ENCODE measurements at regions of chr4 and their contacts with region 1.

Region 1: DNA sequence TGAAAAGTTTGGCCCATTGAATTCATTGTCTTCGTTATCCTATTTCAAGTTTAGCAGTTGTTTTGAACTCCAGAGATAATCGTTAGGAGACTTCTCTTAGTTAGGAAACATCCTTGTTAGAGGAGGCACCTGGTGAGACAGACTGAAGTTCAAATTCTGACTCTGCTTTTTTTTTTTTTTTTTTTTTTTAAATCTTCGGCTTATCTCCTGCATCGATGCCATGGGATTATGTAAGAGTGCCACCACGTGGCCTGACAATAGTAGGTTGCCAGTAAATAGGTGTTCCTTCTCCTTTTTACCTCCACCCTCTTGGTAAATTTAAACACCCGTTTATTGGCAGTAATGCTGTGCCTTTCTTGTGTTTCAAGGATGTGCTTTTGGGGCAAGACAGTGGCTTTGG is 149.3 kb downstream of the SOWAHB start:
- DNase-seq: peak; percentile 69
- H3K4me3 Mint-ChIP-seq: no peak overlapping the region
- H3K27ac Mint-ChIP-seq: no peak overlapping the region
- H3K4me1 Mint-ChIP-seq: peaks cover 2% of the 10 kb centered on the region
- H3K27me3 Mint-ChIP-seq: peaks cover 27% of the 10 kb centered on the region

Region 2: GRCh38 chr4:76430519-76431388 is 317.9 kb before region 1 on chr4:
- intact Hi-C with region 1: loop called (anchors 2 kb)
- DNase-seq: peak; percentile 62
- H3K4me3 Mint-ChIP-seq: no peak overlapping the region
- H3K27ac Mint-ChIP-seq: no peak overlapping the region
- H3K4me1 Mint-ChIP-seq: no peaks in the 10 kb centered on the region
- H3K27me3 Mint-ChIP-seq: peaks cover 33% of the 10 kb centered on the region

Region 3: GRCh38 chr4:76708971-76709771 is 39.5 kb before region 1 on chr4:
- intact Hi-C with region 1: no loop called
- DNase-seq: no peak
- H3K4me3 Mint-ChIP-seq: no peak overlapping the region
- H3K27ac Mint-ChIP-seq: no peak overlapping the region
- H3K4me1 Mint-ChIP-seq: peaks cover 5% of the 10 kb centered on the region
- H3K27me3 Mint-ChIP-seq: peaks cover 14% of the 10 kb centered on the region